ENCODE measurements at regions of chr4 and their contacts with region 1.

Region 1: DNA sequence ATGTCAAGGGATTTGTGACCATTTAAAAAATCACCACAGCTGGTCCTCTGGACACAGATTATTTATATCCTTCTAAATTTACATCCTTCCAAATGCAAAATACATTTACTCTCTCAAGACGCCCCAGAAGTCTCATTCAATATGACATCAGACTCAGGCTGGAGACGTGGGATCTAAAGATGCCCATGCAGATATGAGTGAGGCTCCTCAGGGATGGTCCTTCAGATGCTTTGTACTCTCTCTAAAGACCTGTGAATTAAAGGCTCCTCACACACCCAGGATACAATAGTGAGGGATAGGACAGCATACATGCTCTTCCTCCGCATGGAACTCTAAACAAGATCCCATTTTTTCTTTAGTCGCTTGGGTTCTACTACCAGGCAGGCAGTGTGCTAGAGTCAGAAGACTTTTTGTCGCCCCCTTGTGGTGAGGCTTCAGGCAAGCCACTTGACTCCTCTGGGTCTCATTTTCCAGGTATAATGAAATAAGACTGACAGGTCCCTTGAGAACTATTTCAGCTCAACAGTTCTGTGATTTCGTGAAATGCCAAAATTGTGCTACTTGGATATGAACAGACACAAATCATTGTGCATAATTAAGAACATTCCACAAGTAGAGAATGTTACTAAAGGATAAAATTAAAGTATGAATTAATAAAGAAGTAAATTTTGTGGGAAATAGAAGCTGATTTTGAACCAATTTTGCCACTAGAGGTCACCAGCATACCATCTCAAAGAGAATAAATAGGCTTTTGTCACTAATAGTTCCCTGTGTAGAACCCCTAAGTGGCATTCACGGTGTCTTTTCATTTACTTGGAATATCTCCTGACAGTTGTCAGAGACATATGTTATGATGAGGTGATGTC is 13.7 kb upstream of the SCOC start:
- DNase-seq: peak; percentile 90
- H3K4me3 Mint-ChIP-seq: no peak overlapping the region
- H3K27ac Mint-ChIP-seq: no peak overlapping the region
- H3K4me1 Mint-ChIP-seq: peaks cover 8% of the 10 kb centered on the region
- H3K27me3 Mint-ChIP-seq: peaks cover 13% of the 10 kb centered on the region
- CTCF ChIP-seq: peak; percentile 80

Region 2: DNA sequence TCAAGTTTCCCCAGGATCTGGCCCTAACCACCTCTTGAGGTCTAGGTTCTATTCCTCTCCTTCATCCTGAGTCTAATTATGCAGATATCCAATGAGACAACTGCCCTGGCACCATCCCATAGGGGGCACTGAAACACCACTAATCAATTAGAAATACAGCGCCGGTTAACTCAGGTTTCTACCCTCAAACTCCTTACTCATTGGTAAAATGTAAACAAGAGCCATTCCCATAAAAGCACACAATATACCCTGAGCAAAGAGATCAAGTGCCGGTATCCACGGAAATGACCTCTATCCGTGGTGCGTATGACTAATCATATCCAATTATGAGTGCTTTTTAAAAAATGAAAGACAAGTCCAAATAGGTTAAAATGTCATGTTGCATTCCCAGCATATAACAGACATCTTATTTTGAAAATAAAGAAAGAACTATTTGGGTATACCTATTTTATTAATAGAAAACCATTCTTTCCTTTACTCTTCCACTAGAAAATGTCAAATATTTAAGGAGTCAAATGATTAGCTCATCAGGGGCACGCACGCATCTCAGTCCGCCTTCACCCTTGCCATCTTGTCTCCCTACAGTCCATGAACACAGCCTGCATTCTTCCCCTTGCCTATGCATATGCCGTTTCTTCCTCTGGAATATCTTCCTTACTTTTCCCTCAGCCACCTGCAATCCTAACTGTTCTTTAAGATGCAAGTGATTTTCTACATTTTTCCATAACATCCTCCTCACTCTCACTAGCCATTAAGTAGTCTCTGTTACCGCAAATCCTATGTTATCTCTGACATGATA is 346.9 kb before region 1 on chr4:
- CTCF ChIA-PET with region 1: interaction called, 12 read pairs
- POLR2A ChIA-PET with region 1: no interaction called
- intact Hi-C with region 1: loop called (anchors 1 kb)
- DNase-seq: peak; percentile 86
- H3K4me3 Mint-ChIP-seq: no peak overlapping the region
- H3K27ac Mint-ChIP-seq: peak overlapping the region; percentile 0
- H3K4me1 Mint-ChIP-seq: peaks cover 7% of the 10 kb centered on the region
- H3K27me3 Mint-ChIP-seq: no peaks in the 10 kb centered on the region
- CTCF ChIP-seq: peak; percentile 47

Region 3: GRCh38 chr4:140373328-140374129 is 13.7 kb after region 1 on chr4 and contains the start of gene SCOC:
- CTCF ChIA-PET with region 1: interaction called, 52 read pairs
- POLR2A ChIA-PET with region 1: interaction called, 31 read pairs
- intact Hi-C with region 1: no loop called
- DNase-seq: peak; percentile 100
- H3K4me3 Mint-ChIP-seq: no peak within 1 kb of the TSS
- H3K27ac Mint-ChIP-seq: no peak within 1 kb of the TSS
- H3K4me1 Mint-ChIP-seq: peaks cover 34% of the 10 kb centered on the region
- H3K27me3 Mint-ChIP-seq: no peaks in the 10 kb centered on the region
- CTCF ChIP-seq: no peak
- total RNA-seq, gene SCOC: 49.2 and 57.5 TPM in 2 replicates

Region 4: GRCh38 chr4:140579278-140579677 is 219.5 kb after region 1 on chr4:
- CTCF ChIA-PET with region 1: interaction called, 12 read pairs
- POLR2A ChIA-PET with region 1: no interaction called
- intact Hi-C with region 1: no loop called
- DNase-seq: no peak
- H3K4me3 Mint-ChIP-seq: no peak overlapping the region
- H3K27ac Mint-ChIP-seq: no peak overlapping the region
- H3K4me1 Mint-ChIP-seq: no peaks in the 10 kb centered on the region
- H3K27me3 Mint-ChIP-seq: peaks cover 31% of the 10 kb centered on the region
- CTCF ChIP-seq: no peak

Region 5: DNA sequence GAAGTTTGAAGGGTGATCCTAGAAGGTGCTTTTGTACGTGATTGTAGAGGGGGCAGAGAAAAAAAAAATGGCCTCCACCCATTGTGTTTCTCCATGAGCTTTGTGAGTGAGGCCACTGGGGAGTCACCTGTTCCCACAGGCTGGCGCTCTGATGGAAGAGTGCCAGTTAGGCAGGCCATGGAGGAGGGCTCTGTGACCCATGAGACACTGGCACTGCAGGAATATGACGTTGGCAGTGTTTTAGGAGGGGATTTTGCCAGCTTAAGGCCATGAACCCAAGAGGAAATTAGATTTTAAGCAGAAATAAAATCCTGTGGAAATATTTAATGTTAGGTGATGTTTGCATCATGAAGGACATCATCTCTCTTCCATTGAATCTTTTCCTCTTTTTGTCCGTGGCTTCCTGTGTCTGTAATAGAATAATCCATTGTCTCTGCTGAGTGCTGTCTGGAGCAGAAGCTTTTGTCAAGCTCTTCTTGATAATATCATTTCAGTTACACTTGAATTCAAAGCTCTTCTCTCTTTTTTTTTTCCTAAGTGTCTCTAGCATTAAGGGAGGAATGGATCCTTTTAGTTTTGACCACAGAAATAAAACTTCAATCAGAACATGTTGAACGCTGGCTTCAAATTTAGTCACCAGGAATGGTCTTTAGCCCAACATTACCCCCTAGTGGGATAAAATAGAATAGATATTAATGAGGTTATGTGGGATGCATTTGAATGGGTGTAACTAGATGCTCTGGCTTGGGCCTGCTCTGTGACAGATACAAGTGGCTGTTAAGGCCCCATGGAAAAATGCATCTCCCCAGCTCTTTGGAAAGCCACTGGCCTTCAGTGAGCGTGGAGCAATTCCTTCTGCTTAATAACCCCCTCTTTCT is 250.0 kb after region 1 on chr4:
- CTCF ChIA-PET with region 1: interaction called, 99 read pairs
- POLR2A ChIA-PET with region 1: interaction called, 4 read pairs
- intact Hi-C with region 1: loop called (anchors 1 kb)
- DNase-seq: peak; percentile 66
- H3K4me3 Mint-ChIP-seq: no peak overlapping the region
- H3K27ac Mint-ChIP-seq: no peak overlapping the region
- H3K4me1 Mint-ChIP-seq: peaks cover 6% of the 10 kb centered on the region
- H3K27me3 Mint-ChIP-seq: no peaks in the 10 kb centered on the region
- CTCF ChIP-seq: peak; percentile 70

Measured in MCF 10A (cell line).